ENCODE measurements at regions of chr5 and their contacts with region 1.

Region 1: DNA sequence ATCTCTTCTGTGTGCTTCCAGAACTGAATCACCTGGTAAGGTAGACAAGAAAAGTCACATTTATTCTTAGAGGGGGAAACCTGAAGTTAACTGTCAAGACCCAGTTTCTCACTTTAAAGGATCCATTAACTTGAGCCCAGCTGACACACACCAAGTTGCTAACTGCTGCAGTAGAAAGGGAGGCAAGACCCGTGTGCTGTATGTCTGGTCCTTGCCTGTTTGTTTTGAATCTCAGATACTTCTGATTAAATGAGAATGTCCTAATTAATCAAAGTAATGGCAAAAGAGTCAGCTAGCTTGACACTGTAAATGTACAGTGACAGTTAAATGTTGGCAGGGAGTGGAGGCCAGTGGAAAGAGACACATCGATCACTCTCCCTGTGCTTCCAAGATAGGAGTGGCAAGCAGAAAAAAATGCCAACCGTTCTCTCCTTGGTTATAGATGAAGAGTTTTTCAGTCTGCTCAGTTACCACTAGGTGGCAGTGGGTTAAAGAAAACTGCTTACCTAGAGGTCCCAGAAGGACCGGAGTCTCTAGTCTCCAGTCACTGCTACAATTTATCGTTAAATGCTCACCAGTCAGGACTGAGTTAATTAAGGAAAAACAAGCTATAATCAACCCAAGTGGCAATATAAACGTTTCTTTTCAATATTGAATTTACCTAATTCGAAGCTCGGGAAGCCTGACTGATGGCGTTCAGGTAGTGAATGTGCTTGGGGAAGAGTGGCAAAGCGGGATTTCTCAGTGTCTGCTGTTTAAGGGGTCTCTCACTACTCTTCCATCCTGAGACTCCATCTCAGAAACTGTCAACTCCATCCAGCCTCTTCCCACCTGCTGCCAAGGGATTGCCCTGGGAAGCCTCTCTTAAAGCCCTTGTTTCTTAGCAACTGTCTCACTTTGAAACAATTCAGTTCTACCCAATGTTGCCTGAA is 18.4 kb downstream of the LSM11 start:
- DNase-seq: peak; percentile 79
- H3K4me3 Mint-ChIP-seq: no peak overlapping the region
- H3K27ac Mint-ChIP-seq: no peak overlapping the region
- H3K4me1 Mint-ChIP-seq: peaks cover 1% of the 10 kb centered on the region
- H3K27me3 Mint-ChIP-seq: no peaks in the 10 kb centered on the region
- CTCF ChIP-seq: peak; percentile 91

Region 2: GRCh38 chr5:157748760-157749461 is 13.0 kb before region 1 on chr5:
- CTCF ChIA-PET with region 1: interaction called, 177 read pairs
- POLR2A ChIA-PET with region 1: interaction called, 4 read pairs
- intact Hi-C with region 1: no loop called
- DNase-seq: peak; percentile 87
- H3K4me3 Mint-ChIP-seq: peak overlapping the region; percentile 10
- H3K27ac Mint-ChIP-seq: peak overlapping the region; percentile 70
- H3K4me1 Mint-ChIP-seq: peaks cover 40% of the 10 kb centered on the region
- H3K27me3 Mint-ChIP-seq: no peaks in the 10 kb centered on the region
- CTCF ChIP-seq: no peak

Region 3: DNA sequence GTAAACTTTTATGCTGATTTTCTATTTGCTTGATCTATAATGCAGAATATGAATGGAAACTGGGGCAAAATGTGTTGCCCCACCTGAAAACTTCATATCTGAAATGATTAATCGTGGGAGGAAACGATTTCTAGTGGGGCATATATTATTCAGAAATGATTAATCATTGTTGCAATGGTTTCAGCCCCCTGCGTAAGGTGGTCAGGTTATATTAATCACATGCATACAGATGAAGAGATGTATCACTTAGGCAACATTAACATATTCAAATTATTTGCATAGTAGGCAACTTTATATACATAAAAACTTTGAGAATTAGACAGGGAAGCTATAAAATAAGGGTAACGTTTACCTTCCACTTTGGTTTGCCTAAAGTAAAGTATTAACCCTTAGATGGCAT is 31.3 kb after region 1 on chr5:
- CTCF ChIA-PET with region 1: interaction called, 19 read pairs
- POLR2A ChIA-PET with region 1: interaction called, 6 read pairs
- intact Hi-C with region 1: no loop called
- DNase-seq: no peak
- H3K4me3 Mint-ChIP-seq: no peak overlapping the region
- H3K27ac Mint-ChIP-seq: no peak overlapping the region
- H3K4me1 Mint-ChIP-seq: no peaks in the 10 kb centered on the region
- H3K27me3 Mint-ChIP-seq: no peaks in the 10 kb centered on the region
- CTCF ChIP-seq: no peak

Region 4: DNA sequence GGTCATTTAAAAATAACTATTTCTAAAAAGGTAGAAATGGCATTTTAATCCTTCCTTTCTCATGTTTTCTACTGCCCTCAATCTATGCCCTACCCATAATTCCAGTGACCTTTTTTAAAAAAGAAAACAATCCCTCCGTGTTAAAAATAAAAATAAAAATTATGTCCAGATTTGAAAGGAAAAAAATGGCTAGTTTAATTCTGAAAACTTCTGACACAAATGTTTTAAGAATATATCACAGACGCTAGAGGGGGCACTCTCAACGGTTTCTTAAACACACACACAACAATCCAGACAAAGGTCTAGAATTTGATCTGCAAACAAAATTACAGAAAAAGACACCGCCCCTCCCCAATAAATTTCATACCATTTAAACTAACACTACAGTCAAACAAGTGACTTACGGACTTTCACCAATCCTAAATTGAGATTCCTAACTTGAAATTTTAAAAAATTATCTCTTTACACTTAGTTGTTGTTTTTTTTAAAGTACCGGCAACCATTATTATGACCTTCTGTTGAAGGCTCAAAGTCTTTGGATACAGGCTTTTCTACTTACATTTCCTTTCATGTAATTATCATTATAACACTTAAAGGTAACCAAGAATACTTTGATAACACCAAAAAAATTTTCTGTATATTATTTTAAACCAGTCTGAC is 58.8 kb after region 1 on chr5:
- CTCF ChIA-PET with region 1: interaction called, 7 read pairs
- POLR2A ChIA-PET with region 1: no interaction called
- intact Hi-C with region 1: loop called (anchors 1 kb)
- DNase-seq: peak; percentile 68
- H3K4me3 Mint-ChIP-seq: no peak overlapping the region
- H3K27ac Mint-ChIP-seq: peak overlapping the region; percentile 61
- H3K4me1 Mint-ChIP-seq: peaks cover 21% of the 10 kb centered on the region
- H3K27me3 Mint-ChIP-seq: no peaks in the 10 kb centered on the region
- CTCF ChIP-seq: peak; percentile 68

Region 5: GRCh38 chr5:157877821-157878220 is 115.9 kb after region 1 on chr5:
- CTCF ChIA-PET with region 1: no interaction called
- POLR2A ChIA-PET with region 1: no interaction called
- intact Hi-C with region 1: no loop called
- DNase-seq: no peak
- H3K4me3 Mint-ChIP-seq: no peak overlapping the region
- H3K27ac Mint-ChIP-seq: no peak overlapping the region
- H3K4me1 Mint-ChIP-seq: no peaks in the 10 kb centered on the region
- H3K27me3 Mint-ChIP-seq: no peaks in the 10 kb centered on the region
- CTCF ChIP-seq: no peak

Region 6: DNA sequence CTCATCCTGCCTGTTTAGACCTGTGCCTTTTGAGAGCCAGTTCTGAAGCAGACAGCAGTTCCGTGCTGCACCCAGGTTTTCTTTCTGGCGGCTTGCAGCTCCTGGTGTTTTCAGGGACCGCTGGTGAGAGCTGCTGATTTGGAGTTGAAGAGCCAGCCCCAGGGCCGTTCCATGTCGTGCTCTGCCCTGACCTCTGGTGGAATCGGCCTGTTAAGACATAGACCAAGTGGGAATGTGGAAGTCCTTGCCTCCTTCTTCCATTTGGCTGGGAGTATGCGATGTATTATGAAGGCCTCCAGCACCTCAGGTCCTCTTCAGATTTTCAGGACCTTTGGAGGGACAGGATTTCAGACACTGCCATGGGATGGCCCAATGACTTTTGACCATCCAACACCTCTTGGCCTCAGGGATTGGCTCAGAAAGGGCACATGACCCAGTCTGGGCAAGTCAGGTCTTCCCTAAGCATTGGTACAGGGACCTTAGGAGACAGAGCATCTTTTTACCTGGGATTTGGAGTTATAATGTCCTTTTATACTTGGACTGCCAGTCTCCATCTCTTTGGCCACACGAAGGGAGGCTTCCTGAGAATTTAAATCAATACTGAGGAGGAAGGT is 233.1 kb after region 1 on chr5:
- CTCF ChIA-PET with region 1: interaction called, 11 read pairs
- POLR2A ChIA-PET with region 1: no interaction called
- intact Hi-C with region 1: loop called (anchors 1 kb)
- DNase-seq: peak; percentile 84
- H3K4me3 Mint-ChIP-seq: no peak overlapping the region
- H3K27ac Mint-ChIP-seq: no peak overlapping the region
- H3K4me1 Mint-ChIP-seq: peaks cover 10% of the 10 kb centered on the region
- H3K27me3 Mint-ChIP-seq: no peaks in the 10 kb centered on the region
- CTCF ChIP-seq: peak; percentile 85

Region 7: GRCh38 chr5:159106569-159107282 is 1344.8 kb after region 1 on chr5:
- CTCF ChIA-PET with region 1: interaction called, 13 read pairs
- POLR2A ChIA-PET with region 1: no interaction called
- intact Hi-C with region 1: no loop called
- DNase-seq: peak; percentile 86
- H3K4me3 Mint-ChIP-seq: peak overlapping the region; percentile 64
- H3K27ac Mint-ChIP-seq: peak overlapping the region; percentile 7
- H3K4me1 Mint-ChIP-seq: peaks cover 14% of the 10 kb centered on the region
- H3K27me3 Mint-ChIP-seq: peaks cover 63% of the 10 kb centered on the region
- CTCF ChIP-seq: peak; percentile 100